Caco-2 (cell line): ENCODE measurements at regions of chr6 and their contacts with region 1.

Region 1: GRCh38 chr6:118800394-118801071 is 93.4 kb upstream of the ASF1A start:
- DNase-seq: peak; percentile 73 to 83
- H3K4me3 ChIP-seq: no peak overlapping the region
- H3K4me3 Mint-ChIP-seq: peak overlapping the region; percentile 16
- H3K27ac Mint-ChIP-seq: no peak overlapping the region
- H3K4me1 ChIP-seq: 0 out of 2 replicates have a peak, but pooled peaks cover 3% of the 10 kb centered on the region
- H3K4me1 Mint-ChIP-seq: peaks cover 18% of the 10 kb centered on the region
- H3K27me3 ChIP-seq: no peaks in the 10 kb centered on the region
- H3K27me3 Mint-ChIP-seq: no peaks in the 10 kb centered on the region
- CTCF ChIP-seq: peak; percentile 74 to 85

Region 2: GRCh38 chr6:118618679-118619377 is 181.7 kb before region 1 on chr6:
- CTCF ChIA-PET with region 1: no interaction called
- POLR2A ChIA-PET with region 1: no interaction called
- intact Hi-C with region 1: loop called (anchors 1 kb)
- DNase-seq: peak; percentile 36 to 52
- H3K4me3 ChIP-seq: no peak overlapping the region
- H3K4me3 Mint-ChIP-seq: no peak overlapping the region
- H3K27ac Mint-ChIP-seq: no peak overlapping the region
- H3K4me1 ChIP-seq: no peaks in the 10 kb centered on the region
- H3K4me1 Mint-ChIP-seq: no peaks in the 10 kb centered on the region
- H3K27me3 ChIP-seq: no peaks in the 10 kb centered on the region
- H3K27me3 Mint-ChIP-seq: no peaks in the 10 kb centered on the region
- CTCF ChIP-seq: peak; percentile 75 to 80